AG04450 (cell line): ENCODE measurements at regions of chr1 and their contacts with region 1.

Region 1: DNA sequence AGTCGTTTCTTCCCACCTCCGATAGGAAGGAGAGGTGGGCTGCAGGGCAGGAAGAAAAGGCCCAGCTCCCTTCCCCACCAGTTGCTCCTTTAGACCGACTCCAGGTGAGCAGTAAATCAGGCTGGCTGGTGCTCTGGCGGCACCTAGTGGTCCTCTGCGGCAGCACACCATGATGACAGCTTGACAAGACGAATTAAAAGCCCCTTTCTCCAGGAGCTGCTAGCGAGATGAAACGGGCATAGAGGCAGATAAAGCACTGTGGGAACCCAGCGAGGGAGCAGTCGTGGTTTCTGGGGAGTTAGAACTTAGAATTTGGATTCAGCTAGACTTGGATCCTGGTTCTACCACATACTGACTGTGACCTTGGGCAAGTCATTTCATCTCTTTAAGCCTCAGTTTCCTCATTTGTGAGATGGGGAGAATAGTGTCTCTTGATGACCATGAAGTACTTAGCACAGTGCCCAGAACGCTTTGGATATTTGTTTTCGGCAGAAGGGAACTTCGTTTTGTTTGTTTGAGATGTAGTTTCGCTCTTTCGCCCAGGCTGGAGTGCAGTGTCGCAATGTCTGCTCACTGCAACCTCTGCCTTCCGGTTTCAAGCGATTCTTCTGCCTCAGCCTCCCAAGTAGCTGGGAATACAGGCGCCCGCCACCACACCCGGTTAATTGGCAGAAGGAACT is 21.8 kb upstream of the COL9A2 start:
- DNase-seq: peak; percentile 45
- H3K4me3 ChIP-seq: no peak overlapping the region; the same call in 1 of the 2 replicates
- H3K27ac ChIP-seq: no peak overlapping the region
- H3K27me3 ChIP-seq: peaks cover 4% of the 10 kb centered on the region
- CTCF ChIP-seq: peak; percentile 100

Region 2: DNA sequence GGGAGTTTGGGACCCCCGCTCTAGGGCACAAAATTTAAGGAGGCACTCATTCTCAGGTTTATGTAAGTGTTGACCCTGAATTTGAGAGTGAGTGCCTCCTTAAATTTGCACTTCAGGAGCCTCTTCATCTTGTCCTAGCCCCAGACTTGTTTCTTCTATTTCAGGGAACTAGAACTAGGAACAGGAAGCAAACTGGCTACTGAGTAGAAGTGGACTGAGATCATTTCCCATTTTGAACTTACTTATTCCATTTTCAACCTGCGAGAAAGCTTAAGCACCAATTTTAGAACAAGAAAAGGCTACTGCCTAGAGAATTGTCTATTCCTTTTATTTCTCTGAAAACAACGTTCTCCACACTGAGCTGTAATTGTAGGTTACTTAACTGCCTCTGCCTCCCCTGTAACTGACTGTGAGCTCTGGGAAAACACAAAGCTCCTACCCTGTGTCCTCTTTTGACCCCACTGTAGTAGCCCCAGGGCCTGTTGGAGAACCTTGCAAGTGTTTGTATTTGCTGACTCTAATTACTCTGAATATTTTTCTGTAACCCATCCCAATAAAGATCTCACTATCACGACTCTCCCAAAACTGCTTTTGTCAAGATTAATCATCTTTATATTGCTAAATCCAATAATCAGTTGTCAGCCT is 244.3 kb before region 1 on chr1:
- CTCF ChIA-PET with region 1: interaction called, 12 read pairs
- POLR2A ChIA-PET with region 1: no interaction called
- DNase-seq: no peak
- H3K4me3 ChIP-seq: no peak overlapping the region
- H3K27ac ChIP-seq: no peak overlapping the region
- H3K27me3 ChIP-seq: no peaks in the 10 kb centered on the region
- CTCF ChIP-seq: no peak

Region 3: GRCh38 chr1:40161125-40161887 is 177.6 kb before region 1 on chr1 and contains the start of gene RLF:
- CTCF ChIA-PET with region 1: interaction called, 14 read pairs
- POLR2A ChIA-PET with region 1: no interaction called
- DNase-seq: peak; percentile 78
- H3K4me3 ChIP-seq: peak within 1 kb of the TSS; percentile 85
- H3K27ac ChIP-seq: peak within 1 kb of the TSS; percentile 92
- H3K27me3 ChIP-seq: no peaks in the 10 kb centered on the region
- CTCF ChIP-seq: no peak
- polyA plus RNA-seq, gene RLF: 7.4 and 11.0 TPM in 2 replicates

Region 4: GRCh38 chr1:40226192-40226591 is 112.7 kb before region 1 on chr1:
- CTCF ChIA-PET with region 1: interaction called, 11 read pairs
- POLR2A ChIA-PET with region 1: no interaction called
- DNase-seq: no peak
- H3K4me3 ChIP-seq: no peak overlapping the region
- H3K27ac ChIP-seq: no peak overlapping the region
- H3K27me3 ChIP-seq: no peaks in the 10 kb centered on the region
- CTCF ChIP-seq: no peak

Region 5: DNA sequence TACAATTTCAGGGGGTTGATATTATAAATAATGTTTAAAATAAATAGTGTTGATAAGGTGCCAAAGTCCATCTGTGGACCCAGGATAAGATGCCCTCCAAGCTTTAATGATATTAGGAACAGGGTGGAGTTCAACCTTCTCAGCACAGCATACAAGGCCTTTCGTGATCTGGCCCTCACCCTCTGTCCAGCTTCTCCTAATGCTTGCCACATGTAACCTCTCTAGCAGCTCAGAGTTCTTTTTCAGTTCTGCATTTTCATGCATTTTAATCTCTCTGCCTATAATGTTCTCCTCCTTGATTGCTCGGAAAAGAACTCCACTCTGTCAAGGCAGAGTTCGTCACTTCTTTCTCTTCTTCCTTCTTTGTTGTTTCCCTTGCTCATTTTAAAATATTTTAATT is 13.2 kb after region 1 on chr1:
- CTCF ChIA-PET with region 1: interaction called, 21 read pairs
- POLR2A ChIA-PET with region 1: no interaction called
- DNase-seq: no peak
- H3K4me3 ChIP-seq: no peak overlapping the region
- H3K27ac ChIP-seq: no peak overlapping the region
- H3K27me3 ChIP-seq: no peaks in the 10 kb centered on the region
- CTCF ChIP-seq: no peak

Region 6: DNA sequence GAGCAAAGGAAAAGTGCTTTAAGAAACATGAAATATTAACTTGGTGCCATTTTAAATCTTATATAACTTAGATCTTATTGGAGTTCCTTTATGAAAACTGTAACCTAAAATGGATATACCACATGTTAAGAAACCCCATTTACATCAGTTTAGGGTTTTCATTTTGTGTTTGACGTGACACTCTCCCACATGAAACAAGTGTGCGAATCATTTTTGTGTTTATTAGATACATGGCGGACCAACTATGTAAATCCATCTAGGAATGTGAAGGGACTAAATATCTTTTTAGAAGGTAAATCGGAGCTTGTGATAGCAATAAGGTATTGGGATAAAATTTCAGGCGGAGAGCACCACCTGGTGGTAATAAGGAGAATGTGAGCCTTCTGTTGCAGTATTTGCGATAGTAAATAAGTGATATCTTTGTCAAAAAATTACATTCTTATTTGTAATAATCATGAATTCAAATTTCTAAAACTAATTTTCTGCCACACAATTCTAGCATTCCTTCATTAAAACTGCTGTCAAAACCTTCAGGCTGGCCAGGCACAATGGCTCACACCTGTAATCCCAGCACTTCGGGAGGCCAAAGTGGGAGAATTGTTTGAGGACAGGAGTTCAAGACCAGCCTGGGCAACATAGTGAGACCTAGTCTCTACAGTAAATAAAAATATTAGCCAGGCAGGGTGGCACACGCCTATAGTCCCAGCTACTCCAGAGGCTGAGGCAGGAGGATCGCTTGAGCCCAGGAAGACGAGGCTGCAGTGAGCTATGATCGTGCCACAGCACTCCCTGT is 66.0 kb after region 1 on chr1:
- CTCF ChIA-PET with region 1: interaction called, 28 read pairs
- POLR2A ChIA-PET with region 1: no interaction called
- DNase-seq: no peak
- H3K4me3 ChIP-seq: no peak overlapping the region
- H3K27ac ChIP-seq: no peak overlapping the region
- H3K27me3 ChIP-seq: no peaks in the 10 kb centered on the region
- CTCF ChIP-seq: peak; percentile 77